ENCODE measurements at regions of chr5 and their contacts with region 1.

Region 1: DNA sequence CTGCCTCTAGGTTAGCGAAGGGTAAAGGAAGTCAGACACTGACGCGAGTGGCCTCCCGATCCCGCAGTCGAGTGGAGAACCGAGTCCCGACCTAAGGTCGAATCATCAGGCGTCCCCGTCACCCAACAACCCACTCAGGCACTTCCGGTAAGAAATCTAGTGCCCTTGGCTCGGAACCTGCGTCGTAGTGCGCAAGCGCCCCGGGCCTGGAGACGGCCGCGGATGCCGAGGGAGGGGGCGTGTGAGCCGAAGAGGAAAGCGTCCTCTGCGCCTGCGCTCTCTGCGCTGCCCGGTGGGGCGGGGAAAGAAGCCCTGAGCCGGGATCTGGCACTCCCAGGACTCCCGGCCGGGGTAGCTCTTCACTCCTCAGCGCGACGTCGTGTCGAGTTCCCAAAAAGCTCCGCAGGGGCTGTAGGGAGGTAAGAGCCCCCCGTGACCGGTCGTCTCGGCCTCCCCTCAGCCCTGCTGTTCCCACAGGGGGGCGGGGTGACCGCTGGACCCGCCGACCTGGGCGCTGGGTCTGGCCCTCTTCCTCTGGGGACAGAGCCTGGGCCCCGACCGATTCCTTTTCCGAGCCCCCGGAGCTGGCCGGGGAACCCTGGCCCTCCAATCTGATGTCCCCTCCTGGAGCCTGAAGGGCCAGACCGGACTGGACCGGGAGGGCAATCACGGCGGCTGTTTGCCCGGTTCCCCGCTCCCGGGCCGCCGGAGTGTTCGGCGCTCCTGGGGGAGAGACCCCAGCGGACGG is at the start of gene ZFYVE16:
- DNase-seq: peak; percentile 91 to 99 (median 96)
- ATAC-seq: peak; percentile 87
- H3K4me3 ChIP-seq: peak within 1 kb of the TSS; percentile 99
- H3K4me3 Mint-ChIP-seq: peak within 1 kb of the TSS; percentile 99
- H3K27ac ChIP-seq: peak within 1 kb of the TSS; percentile 85 to 97
- H3K27ac Mint-ChIP-seq: peak within 1 kb of the TSS; percentile 93
- H3K4me1 ChIP-seq: peaks cover 15% of the 10 kb centered on the region
- H3K4me1 Mint-ChIP-seq: peaks cover 34% of the 10 kb centered on the region
- H3K27me3 ChIP-seq: no peaks in the 10 kb centered on the region
- H3K27me3 Mint-ChIP-seq: no peaks in the 10 kb centered on the region
- CTCF ChIP-seq: no peak
- total RNA-seq, gene ZFYVE16: 7.5 to 7.9 TPM

Region 2: DNA sequence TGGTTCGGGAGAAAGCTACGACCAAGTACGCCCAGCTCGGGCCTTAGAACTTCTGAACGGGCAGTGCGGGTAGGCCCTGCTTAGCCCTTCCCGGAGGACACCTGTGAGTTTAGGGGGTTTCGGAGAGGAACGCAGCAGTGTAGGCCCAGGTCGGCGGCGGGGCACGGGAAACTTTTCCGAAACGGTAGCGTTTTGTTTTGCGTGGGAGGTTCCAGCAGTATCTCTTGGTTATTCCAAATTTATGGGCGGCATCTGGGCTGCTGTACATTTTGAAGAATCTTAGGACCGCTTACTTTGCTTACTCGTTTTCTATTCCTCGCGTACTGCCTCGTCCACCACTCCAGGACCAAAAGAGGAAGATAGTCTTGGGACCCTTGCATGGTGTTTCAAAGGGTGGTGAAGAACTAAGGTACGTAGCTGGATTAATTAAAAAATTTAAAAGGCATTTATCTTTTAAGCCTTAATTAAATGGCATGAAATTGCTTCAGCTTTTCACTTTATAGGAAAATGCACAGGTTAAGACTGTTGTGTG is 795.2 kb before region 1 on chr5:
- CTCF ChIA-PET with region 1: no interaction called
- POLR2A ChIA-PET with region 1: interaction called, 4 read pairs
- intact Hi-C with region 1: loop called in 1 of 2 experiments (anchors 5 kb)
- DNase-seq: no peak
- ATAC-seq: no peak
- H3K4me3 ChIP-seq: peak overlapping the region; percentile 81
- H3K4me3 Mint-ChIP-seq: peak overlapping the region; percentile 91
- H3K27ac ChIP-seq: peak overlapping the region; percentile 76 to 90
- H3K27ac Mint-ChIP-seq: peak overlapping the region; percentile 98
- H3K4me1 ChIP-seq: peaks cover 14% of the 10 kb centered on the region
- H3K4me1 Mint-ChIP-seq: peaks cover 42% of the 10 kb centered on the region
- H3K27me3 ChIP-seq: no peaks in the 10 kb centered on the region
- H3K27me3 Mint-ChIP-seq: no peaks in the 10 kb centered on the region
- CTCF ChIP-seq: no peak

Region 3: GRCh38 chr5:80083101-80083890 is 324.6 kb before region 1 on chr5:
- CTCF ChIA-PET with region 1: no interaction called
- POLR2A ChIA-PET with region 1: no interaction called
- intact Hi-C with region 1: loop called in 1 of 2 experiments (anchors 10 kb)
- DNase-seq: peak in 4 of 14 experiments; percentile 20 to 68 (median 59)
- ATAC-seq: peak; percentile 83
- H3K4me3 ChIP-seq: peak overlapping the region; percentile 39
- H3K4me3 Mint-ChIP-seq: peak overlapping the region; percentile 89
- H3K27ac ChIP-seq: no peak overlapping the region
- H3K27ac Mint-ChIP-seq: peak overlapping the region; percentile 71
- H3K4me1 ChIP-seq: peaks cover 10% of the 10 kb centered on the region
- H3K4me1 Mint-ChIP-seq: peaks cover 16% of the 10 kb centered on the region
- H3K27me3 ChIP-seq: no peaks in the 10 kb centered on the region
- H3K27me3 Mint-ChIP-seq: no peaks in the 10 kb centered on the region
- CTCF ChIP-seq: peak; percentile 46

Region 4: DNA sequence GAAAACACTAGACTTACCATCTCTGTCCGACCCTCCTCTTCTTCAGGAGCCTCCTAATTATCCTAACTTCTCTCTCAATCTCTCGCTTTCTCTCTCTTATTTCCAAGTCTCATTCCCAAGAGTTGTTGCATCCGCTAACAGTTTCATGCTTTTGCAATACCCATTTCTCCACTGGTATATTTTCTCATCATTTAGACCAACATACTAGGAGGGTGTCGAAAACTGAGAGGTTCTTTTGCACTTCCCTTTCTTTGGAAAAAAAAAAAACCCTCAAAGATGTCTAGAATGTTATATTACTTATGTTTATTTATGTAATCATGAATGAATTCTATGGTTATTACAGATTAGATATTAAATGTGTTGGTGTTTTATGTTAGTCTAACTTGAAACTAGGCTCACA is 52.2 kb before region 1 on chr5:
- CTCF ChIA-PET with region 1: no interaction called
- POLR2A ChIA-PET with region 1: no interaction called
- intact Hi-C with region 1: no loop called
- DNase-seq: no peak
- ATAC-seq: no peak
- H3K4me3 ChIP-seq: no peak overlapping the region
- H3K4me3 Mint-ChIP-seq: no peak overlapping the region
- H3K27ac ChIP-seq: no peak overlapping the region
- H3K27ac Mint-ChIP-seq: no peak overlapping the region
- H3K4me1 ChIP-seq: no peaks in the 10 kb centered on the region
- H3K4me1 Mint-ChIP-seq: no peaks in the 10 kb centered on the region
- H3K27me3 ChIP-seq: no peaks in the 10 kb centered on the region
- H3K27me3 Mint-ChIP-seq: no peaks in the 10 kb centered on the region
- CTCF ChIP-seq: no peak

Region 5: DNA sequence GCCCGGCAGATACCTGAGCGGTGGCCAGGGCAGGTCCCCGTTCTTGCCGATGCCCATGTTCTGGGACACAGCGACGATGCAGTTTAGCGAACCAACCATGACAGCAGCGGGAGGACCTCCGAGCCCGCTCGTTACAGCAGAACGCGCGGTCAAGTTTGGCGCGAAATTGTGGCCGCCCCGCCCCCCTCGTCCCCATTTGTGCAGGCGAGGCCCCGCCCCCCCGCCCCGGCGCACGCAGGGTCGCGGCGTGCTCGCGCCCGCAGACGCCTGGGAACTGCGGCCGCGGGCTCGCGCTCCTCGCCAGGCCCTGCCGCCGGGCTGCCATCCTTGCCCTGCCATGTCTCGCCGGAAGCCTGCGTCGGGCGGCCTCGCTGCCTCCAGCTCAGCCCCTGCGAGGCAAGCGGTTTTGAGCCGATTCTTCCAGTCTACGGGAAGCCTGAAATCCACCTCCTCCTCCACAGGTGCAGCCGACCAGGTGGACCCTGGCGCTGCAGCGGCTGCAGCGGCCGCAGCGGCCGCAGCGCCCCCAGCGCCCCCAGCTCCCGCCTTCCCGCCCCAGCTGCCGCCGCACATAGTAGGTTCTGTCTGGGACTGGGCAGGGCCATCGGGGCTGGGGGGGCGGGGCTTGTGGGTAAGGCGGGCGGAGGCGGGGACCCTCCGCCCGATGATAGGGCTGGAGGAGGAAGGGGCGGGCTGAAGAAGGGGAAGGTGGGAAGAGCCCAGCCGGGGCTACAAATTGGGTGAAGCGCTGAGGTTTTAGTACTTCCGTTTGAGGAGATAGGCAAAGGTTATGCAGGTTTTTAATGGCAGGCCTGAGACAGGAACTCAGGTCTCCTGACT is 246.7 kb after region 1 on chr5 and contains the starts of genes DHFR and MSH3:
- CTCF ChIA-PET with region 1: no interaction called
- POLR2A ChIA-PET with region 1: interaction called, 7 read pairs
- intact Hi-C with region 1: loop called in 1 of 2 experiments (anchors 5 kb)
- DNase-seq: peak; percentile 81 to 96 (median 86)
- ATAC-seq: peak; percentile 74
- H3K4me3 ChIP-seq: peak within 1 kb of the TSS; percentile 65
- H3K4me3 Mint-ChIP-seq: peak within 1 kb of the TSS; percentile 92
- H3K27ac ChIP-seq: peak within 1 kb of the TSS; percentile 60 to 78
- H3K27ac Mint-ChIP-seq: peak within 1 kb of the TSS; percentile 95
- H3K4me1 ChIP-seq: peaks cover 20% of the 10 kb centered on the region
- H3K4me1 Mint-ChIP-seq: peaks cover 35% of the 10 kb centered on the region
- H3K27me3 ChIP-seq: no peaks in the 10 kb centered on the region
- H3K27me3 Mint-ChIP-seq: no peaks in the 10 kb centered on the region
- CTCF ChIP-seq: no peak
- total RNA-seq, gene DHFR: 3.6 to 4.0 TPM
- total RNA-seq, gene MSH3: 11.3 to 13.0 TPM

Region 6: DNA sequence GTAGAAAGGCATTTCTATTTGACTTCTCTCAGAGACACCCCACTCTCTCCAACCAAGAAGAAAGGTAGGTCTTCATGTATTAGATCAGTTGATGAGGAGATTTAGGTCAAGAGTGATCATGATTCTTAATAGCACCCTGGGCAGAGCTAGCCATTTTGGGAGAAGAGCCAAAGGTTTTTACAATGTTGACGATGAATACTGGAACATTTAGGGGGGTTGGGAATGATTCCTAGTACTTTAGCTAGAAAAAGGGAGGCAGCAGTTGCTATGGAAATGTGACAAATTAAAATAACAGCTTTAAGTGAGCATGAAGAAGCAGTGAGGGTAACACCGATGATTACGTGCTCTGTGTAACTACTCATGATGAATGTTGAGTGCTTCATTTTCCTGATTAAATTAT is 1879.7 kb after region 1 on chr5:
- CTCF ChIA-PET with region 1: no interaction called
- POLR2A ChIA-PET with region 1: no interaction called
- intact Hi-C with region 1: loop called in 1 of 2 experiments (anchors 10 kb)
- DNase-seq: no peak
- ATAC-seq: no peak
- H3K4me3 ChIP-seq: no peak overlapping the region
- H3K4me3 Mint-ChIP-seq: no peak overlapping the region
- H3K27ac ChIP-seq: no peak overlapping the region
- H3K27ac Mint-ChIP-seq: no peak overlapping the region
- H3K4me1 ChIP-seq: no peaks in the 10 kb centered on the region
- H3K4me1 Mint-ChIP-seq: no peaks in the 10 kb centered on the region
- H3K27me3 ChIP-seq: no peaks in the 10 kb centered on the region
- H3K27me3 Mint-ChIP-seq: no peaks in the 10 kb centered on the region
- CTCF ChIP-seq: no peak